AG04449 (cell line): ENCODE measurements at regions of chr13 and their contacts with region 1.

Region 1: DNA sequence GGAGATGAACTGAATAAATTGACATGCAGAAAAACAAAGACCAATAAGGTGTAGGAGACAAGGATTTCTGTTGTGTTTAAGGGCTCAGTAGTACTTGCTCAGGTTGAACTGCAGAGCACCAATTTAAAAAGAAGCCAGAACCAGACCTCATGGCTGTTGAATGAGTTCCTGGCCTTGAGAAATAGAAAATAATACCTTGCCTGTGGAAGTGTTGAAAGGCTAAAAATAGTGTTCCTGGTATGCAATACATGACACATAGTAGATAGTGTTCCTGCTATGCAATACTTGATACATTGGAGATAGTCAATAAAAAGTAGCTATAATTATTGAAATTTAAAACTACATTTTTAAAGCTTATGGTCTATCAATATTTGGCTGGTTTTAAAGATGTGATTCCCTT is 595.8 kb downstream of the PCDH9 start:
- DNase-seq: no peak
- H3K4me3 ChIP-seq: no peak overlapping the region
- CTCF ChIP-seq: no peak

Region 2: GRCh38 chr13:66618702-66619101 is 15.7 kb before region 1 on chr13:
- CTCF ChIA-PET with region 1: interaction called, 10 read pairs
- POLR2A ChIA-PET with region 1: no interaction called
- DNase-seq: peak; percentile 4
- H3K4me3 ChIP-seq: no peak overlapping the region
- CTCF ChIP-seq: peak; percentile 34